ENCODE measurements at regions of chr1 and their contacts with region 1.

Region 1: DNA sequence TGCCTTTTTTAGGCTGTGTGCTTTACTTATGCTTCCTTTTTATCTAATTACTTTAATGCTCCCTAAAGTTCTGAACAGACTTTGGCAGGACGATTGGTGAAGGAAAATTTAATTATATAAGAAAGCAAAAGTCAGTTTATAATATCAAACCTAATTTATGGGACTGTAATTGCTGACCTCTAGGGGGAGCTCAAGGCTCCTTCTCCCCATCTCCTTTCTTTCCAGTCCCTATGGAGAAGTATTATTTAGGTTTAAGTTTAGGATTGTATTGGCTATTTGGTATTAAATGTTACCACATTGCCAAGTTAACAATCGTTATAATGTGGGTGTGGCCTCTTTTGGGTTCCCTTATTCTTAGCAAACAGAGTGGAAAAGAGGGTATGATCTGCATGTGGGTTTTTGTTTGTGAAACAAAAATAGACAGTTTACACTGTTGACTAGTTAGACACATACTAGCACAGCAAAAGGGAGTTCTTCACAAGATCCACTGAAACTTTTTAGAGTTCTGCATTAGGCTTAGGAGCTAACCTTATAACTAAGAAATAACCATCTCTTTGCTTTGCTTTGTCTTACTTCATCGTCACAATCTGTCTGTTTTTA is 48.2 kb upstream of the TNFSF4 start:
- DNase-seq: peak; percentile 75
- H3K4me3 Mint-ChIP-seq: no peak overlapping the region
- H3K27ac Mint-ChIP-seq: no peak overlapping the region
- H3K4me1 Mint-ChIP-seq: no peaks in the 10 kb centered on the region
- H3K27me3 Mint-ChIP-seq: no peaks in the 10 kb centered on the region
- CTCF ChIP-seq: peak; percentile 83

Region 2: DNA sequence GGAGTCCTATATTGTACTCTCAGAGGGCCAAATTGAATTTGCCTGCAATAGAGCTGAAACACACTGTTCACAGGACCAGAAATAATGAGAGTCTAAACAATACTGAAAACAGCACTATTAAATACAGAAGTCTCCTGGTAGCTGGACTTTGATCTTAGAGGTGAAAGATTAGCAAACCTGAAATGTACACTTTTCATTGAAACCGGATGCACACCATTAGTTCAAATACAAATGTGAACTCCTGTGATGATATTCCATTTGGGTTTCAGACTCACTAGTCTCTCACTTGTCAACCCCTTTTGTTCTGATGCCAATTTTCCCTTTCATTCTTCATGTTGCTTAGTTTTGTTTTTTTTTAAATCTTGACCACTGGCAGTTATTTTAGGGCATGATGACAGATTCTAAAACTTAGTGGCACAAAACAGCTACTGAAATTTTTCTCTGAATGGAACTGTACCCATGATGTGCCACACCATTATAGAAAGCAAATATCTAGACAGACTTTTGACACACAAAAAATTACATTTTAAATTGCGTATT is 42.3 kb before region 1 on chr1:
- CTCF ChIA-PET with region 1: interaction called, 16 read pairs
- POLR2A ChIA-PET with region 1: no interaction called
- intact Hi-C with region 1: no loop called
- DNase-seq: no peak
- H3K4me3 Mint-ChIP-seq: no peak overlapping the region
- H3K27ac Mint-ChIP-seq: no peak overlapping the region
- H3K4me1 Mint-ChIP-seq: no peaks in the 10 kb centered on the region
- H3K27me3 Mint-ChIP-seq: no peaks in the 10 kb centered on the region
- CTCF ChIP-seq: no peak

Region 3: GRCh38 chr1:173355281-173356031 is 100.1 kb after region 1 on chr1:
- CTCF ChIA-PET with region 1: interaction called, 12 read pairs
- POLR2A ChIA-PET with region 1: no interaction called
- intact Hi-C with region 1: no loop called
- DNase-seq: no peak
- H3K4me3 Mint-ChIP-seq: no peak overlapping the region
- H3K27ac Mint-ChIP-seq: no peak overlapping the region
- H3K4me1 Mint-ChIP-seq: peaks cover 10% of the 10 kb centered on the region
- H3K27me3 Mint-ChIP-seq: no peaks in the 10 kb centered on the region
- CTCF ChIP-seq: no peak

Region 4: DNA sequence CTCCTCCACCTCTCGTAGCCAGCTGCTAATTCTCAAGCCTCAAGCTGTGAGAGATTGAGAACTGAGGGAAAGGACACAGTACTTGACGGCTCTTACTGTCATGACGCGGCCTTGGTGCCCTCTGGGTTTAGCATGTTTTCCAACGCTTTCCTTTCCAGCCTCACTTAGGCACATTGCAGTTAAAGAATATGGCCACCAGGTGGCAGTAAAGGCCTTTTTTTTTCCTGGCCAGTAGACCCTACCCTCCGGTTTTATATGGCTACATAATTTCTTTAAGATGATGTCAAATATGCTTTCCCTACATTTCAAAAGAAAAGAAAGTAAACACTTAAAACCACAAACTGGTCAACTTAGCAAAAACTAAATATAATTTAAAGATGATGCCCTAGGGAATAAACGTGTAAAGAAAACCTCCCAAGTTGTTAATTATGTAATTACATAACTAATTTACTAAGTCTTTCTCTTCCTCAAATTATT is 165.1 kb after region 1 on chr1:
- CTCF ChIA-PET with region 1: interaction called, 6 read pairs
- POLR2A ChIA-PET with region 1: no interaction called
- intact Hi-C with region 1: loop called (anchors 1 kb)
- DNase-seq: peak; percentile 91
- H3K4me3 Mint-ChIP-seq: no peak overlapping the region
- H3K27ac Mint-ChIP-seq: peak overlapping the region; percentile 9
- H3K4me1 Mint-ChIP-seq: peaks cover 22% of the 10 kb centered on the region
- H3K27me3 Mint-ChIP-seq: no peaks in the 10 kb centered on the region
- CTCF ChIP-seq: peak; percentile 94

Region 5: GRCh38 chr1:173824331-173825081 is 569.2 kb after region 1 on chr1 and contains the starts of genes CENPL and DARS2:
- CTCF ChIA-PET with region 1: interaction called, 3 read pairs
- POLR2A ChIA-PET with region 1: no interaction called
- intact Hi-C with region 1: loop called (anchors 2 kb)
- DNase-seq: peak; percentile 100
- H3K4me3 Mint-ChIP-seq: peak within 1 kb of the TSS; percentile 97
- H3K27ac Mint-ChIP-seq: peak within 1 kb of the TSS; percentile 98
- H3K4me1 Mint-ChIP-seq: peaks cover 39% of the 10 kb centered on the region
- H3K27me3 Mint-ChIP-seq: no peaks in the 10 kb centered on the region
- CTCF ChIP-seq: no peak
- total RNA-seq, gene CENPL: 14.1 and 24.5 TPM in 2 replicates
- total RNA-seq, gene DARS2: 34.6 and 40.4 TPM in 2 replicates